ENCODE measurements at regions of chr16 and their contacts with region 1.

Region 1: DNA sequence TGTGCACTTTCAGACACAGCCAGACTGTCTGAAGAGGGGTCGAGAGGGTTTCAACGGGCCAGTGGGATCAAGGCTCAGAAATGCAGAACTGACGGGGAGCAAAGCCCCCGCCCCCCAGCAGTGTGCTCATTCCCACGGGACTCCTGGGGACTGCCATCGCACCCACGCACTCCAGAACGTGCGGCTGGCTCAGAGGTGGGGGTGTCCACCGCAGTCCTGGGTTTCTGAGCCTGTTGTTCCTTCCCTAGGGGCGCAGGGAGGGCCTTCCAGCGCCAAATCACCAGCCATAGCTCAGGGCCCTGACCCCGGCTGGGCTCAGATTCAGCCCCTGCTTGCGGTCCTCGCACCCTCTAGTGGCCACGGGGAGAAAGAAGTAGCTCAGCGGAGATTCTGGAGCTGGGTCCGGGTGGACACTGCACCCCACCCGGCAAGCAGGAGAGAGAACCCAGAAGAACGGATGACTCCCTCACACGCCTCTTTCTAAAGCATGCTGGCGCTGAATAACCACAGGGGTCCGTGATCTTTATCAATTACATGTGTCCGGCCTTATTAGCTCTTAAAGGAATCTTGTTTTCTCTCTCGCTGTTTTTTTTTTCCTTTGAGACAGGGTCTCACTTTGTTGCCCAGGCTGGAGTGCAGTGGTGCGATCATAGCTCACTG is 45.0 kb upstream of the USP7 start:
- DNase-seq: peak; percentile 21
- ATAC-seq: peak; percentile 100
- H3K4me3 ChIP-seq: no peak overlapping the region; the same call in 1 of the 2 replicates
- H3K27ac ChIP-seq: no peak overlapping the region
- H3K4me1 ChIP-seq: peaks cover 6% of the 10 kb centered on the region
- H3K27me3 ChIP-seq: no peaks in the 10 kb centered on the region
- CTCF ChIP-seq: peak; percentile 83 to 97 (median 89)
- EP300 ChIP-seq: no peak
- POLR2A ChIP-seq: no peak
- RAD21 ChIP-seq: peak; percentile 89

Region 2: GRCh38 chr16:8660841-8661301 is 347.9 kb before region 1 on chr16:
- CTCF ChIA-PET with region 1: interaction called, 10 read pairs
- POLR2A ChIA-PET with region 1: no interaction called
- RAD21 ChIA-PET with region 1: interaction called, 6 read pairs
- SMC1A ChIA-PET with region 1: interaction called, 4 read pairs
- in situ Hi-C with region 1: no loop called
- intact Hi-C with region 1: no loop called
- DNase-seq: no peak
- ATAC-seq: peak; percentile 86
- H3K4me3 ChIP-seq: no peak overlapping the region
- H3K27ac ChIP-seq: no peak overlapping the region
- H3K4me1 ChIP-seq: peaks cover under 1% of the 10 kb centered on the region; the same call in 1 of the 2 replicates
- H3K27me3 ChIP-seq: no peaks in the 10 kb centered on the region
- CTCF ChIP-seq: peak; percentile 42 to 69 (median 59)
- EP300 ChIP-seq: no peak
- POLR2A ChIP-seq: no peak
- RAD21 ChIP-seq: peak; percentile 75

Region 3: GRCh38 chr16:8885674-8886592 is 122.8 kb before region 1 on chr16:
- CTCF ChIA-PET with region 1: interaction called, 43 read pairs
- POLR2A ChIA-PET with region 1: no interaction called
- RAD21 ChIA-PET with region 1: interaction called, 30 read pairs
- SMC1A ChIA-PET with region 1: interaction called, 20 read pairs
- in situ Hi-C with region 1: no loop called
- intact Hi-C with region 1: loop called (anchors 1 kb)
- DNase-seq: no peak
- ATAC-seq: peak; percentile 34
- H3K4me3 ChIP-seq: no peak overlapping the region
- H3K27ac ChIP-seq: no peak overlapping the region
- H3K4me1 ChIP-seq: peaks cover 14% of the 10 kb centered on the region
- H3K27me3 ChIP-seq: no peaks in the 10 kb centered on the region
- CTCF ChIP-seq: no peak
- EP300 ChIP-seq: no peak
- POLR2A ChIP-seq: peak; percentile 48
- RAD21 ChIP-seq: no peak

Region 4: GRCh38 chr16:8899709-8900317 is 108.9 kb before region 1 on chr16:
- CTCF ChIA-PET with region 1: interaction called, 20 read pairs
- POLR2A ChIA-PET with region 1: no interaction called
- RAD21 ChIA-PET with region 1: interaction called, 12 read pairs
- SMC1A ChIA-PET with region 1: interaction called, 28 read pairs
- in situ Hi-C with region 1: no loop called
- intact Hi-C with region 1: loop called (anchors 1 kb)
- DNase-seq: no peak
- ATAC-seq: peak; percentile 90
- H3K4me3 ChIP-seq: no peak overlapping the region
- H3K27ac ChIP-seq: peak overlapping the region; percentile 18; the same call in 1 of the 2 replicates
- H3K4me1 ChIP-seq: peaks cover 5% of the 10 kb centered on the region
- H3K27me3 ChIP-seq: no peaks in the 10 kb centered on the region
- CTCF ChIP-seq: peak in 1 of 3 experiments; percentile 31; a peak in 1 of 6 replicates
- EP300 ChIP-seq: no peak
- POLR2A ChIP-seq: no peak
- RAD21 ChIP-seq: no peak

Region 5: GRCh38 chr16:8936421-8936820 is 72.3 kb before region 1 on chr16:
- CTCF ChIA-PET with region 1: interaction called, 60 read pairs
- POLR2A ChIA-PET with region 1: interaction called, 9 read pairs
- RAD21 ChIA-PET with region 1: interaction called, 34 read pairs
- SMC1A ChIA-PET with region 1: interaction called, 15 read pairs
- in situ Hi-C with region 1: no loop called
- intact Hi-C with region 1: no loop called
- DNase-seq: no peak
- ATAC-seq: peak; percentile 92
- H3K4me3 ChIP-seq: no peak overlapping the region
- H3K27ac ChIP-seq: no peak overlapping the region
- H3K4me1 ChIP-seq: peaks cover 50% of the 10 kb centered on the region
- H3K27me3 ChIP-seq: no peaks in the 10 kb centered on the region
- CTCF ChIP-seq: peak; percentile 70 to 84 (median 77)
- EP300 ChIP-seq: no peak
- POLR2A ChIP-seq: no peak
- RAD21 ChIP-seq: peak; percentile 85

Region 6: DNA sequence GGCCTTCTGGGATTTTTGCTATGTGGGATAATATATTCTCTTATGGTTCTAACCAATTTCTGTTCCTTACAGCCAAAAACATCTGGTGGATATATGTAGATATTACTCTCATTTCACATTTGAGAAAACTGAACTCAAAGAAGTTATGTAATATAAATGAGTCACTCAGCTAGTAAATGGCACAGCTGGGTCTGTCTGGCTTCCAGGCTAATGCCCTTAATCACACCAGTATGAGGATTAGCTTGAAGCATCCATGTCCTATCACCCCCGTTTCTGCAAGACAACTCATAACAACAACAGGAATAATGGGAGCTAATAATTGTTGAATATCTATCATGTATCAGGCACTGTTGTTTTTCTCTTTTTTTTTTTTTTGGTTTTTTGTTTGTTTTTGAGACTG is 10.6 kb before region 1 on chr16:
- CTCF ChIA-PET with region 1: interaction called, 29 read pairs
- POLR2A ChIA-PET with region 1: no interaction called
- RAD21 ChIA-PET with region 1: interaction called, 3 read pairs
- SMC1A ChIA-PET with region 1: interaction called, 3 read pairs
- in situ Hi-C with region 1: no loop called
- intact Hi-C with region 1: no loop called
- DNase-seq: no peak
- ATAC-seq: no peak
- H3K4me3 ChIP-seq: no peak overlapping the region
- H3K27ac ChIP-seq: no peak overlapping the region
- H3K4me1 ChIP-seq: no peaks in the 10 kb centered on the region
- H3K27me3 ChIP-seq: no peaks in the 10 kb centered on the region
- CTCF ChIP-seq: no peak
- EP300 ChIP-seq: no peak
- POLR2A ChIP-seq: no peak
- RAD21 ChIP-seq: no peak

Region 7: GRCh38 chr16:9123871-9124270 is 115.1 kb after region 1 on chr16:
- CTCF ChIA-PET with region 1: interaction called, 10 read pairs
- POLR2A ChIA-PET with region 1: interaction called, 3 read pairs
- RAD21 ChIA-PET with region 1: interaction called, 4 read pairs
- SMC1A ChIA-PET with region 1: interaction called, 3 read pairs
- in situ Hi-C with region 1: no loop called
- intact Hi-C with region 1: no loop called
- DNase-seq: no peak
- ATAC-seq: peak; percentile 54
- H3K4me3 ChIP-seq: no peak overlapping the region
- H3K27ac ChIP-seq: no peak overlapping the region
- H3K4me1 ChIP-seq: peaks cover 32% of the 10 kb centered on the region
- H3K27me3 ChIP-seq: no peaks in the 10 kb centered on the region
- CTCF ChIP-seq: no peak
- EP300 ChIP-seq: no peak
- POLR2A ChIP-seq: no peak
- RAD21 ChIP-seq: no peak